ENCODE measurements at regions of chr12 and their contacts with region 1.

Region 1: DNA sequence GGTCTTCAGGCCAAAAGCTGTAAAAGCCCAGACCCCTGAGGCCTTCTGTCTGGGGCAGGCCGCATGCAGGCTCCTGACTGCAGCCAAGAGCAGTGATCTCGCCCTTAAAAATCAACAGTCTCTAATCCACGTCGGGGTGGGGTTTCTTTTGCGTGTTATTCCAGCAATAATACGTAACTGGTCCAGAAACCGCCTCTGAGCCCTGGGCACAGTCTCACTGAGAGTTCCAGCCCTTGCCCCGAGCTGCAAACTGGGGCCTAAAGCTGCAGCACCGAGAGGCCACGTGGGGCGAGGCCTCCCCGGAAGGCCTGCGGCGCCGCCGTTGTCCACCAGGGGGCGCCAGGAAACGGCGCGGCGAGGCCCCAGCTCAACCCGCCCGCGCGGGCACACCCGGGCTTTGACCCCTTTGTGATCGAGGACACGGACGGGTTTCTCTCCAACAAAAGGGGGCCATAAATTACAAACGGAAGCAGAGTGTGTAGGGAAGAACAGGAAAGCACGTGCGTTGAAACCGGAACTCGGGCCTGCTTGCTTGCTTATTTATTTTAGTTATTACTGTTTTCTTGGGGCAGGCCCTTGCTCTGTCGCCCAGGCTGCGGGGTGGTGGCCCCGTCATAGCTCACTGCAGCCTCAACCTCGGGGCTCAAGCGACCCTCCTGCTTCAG is 87.2 kb downstream of the NINJ2 start:
- DNase-seq: peak; percentile 93
- ATAC-seq: peak; percentile 75

Region 2: DNA sequence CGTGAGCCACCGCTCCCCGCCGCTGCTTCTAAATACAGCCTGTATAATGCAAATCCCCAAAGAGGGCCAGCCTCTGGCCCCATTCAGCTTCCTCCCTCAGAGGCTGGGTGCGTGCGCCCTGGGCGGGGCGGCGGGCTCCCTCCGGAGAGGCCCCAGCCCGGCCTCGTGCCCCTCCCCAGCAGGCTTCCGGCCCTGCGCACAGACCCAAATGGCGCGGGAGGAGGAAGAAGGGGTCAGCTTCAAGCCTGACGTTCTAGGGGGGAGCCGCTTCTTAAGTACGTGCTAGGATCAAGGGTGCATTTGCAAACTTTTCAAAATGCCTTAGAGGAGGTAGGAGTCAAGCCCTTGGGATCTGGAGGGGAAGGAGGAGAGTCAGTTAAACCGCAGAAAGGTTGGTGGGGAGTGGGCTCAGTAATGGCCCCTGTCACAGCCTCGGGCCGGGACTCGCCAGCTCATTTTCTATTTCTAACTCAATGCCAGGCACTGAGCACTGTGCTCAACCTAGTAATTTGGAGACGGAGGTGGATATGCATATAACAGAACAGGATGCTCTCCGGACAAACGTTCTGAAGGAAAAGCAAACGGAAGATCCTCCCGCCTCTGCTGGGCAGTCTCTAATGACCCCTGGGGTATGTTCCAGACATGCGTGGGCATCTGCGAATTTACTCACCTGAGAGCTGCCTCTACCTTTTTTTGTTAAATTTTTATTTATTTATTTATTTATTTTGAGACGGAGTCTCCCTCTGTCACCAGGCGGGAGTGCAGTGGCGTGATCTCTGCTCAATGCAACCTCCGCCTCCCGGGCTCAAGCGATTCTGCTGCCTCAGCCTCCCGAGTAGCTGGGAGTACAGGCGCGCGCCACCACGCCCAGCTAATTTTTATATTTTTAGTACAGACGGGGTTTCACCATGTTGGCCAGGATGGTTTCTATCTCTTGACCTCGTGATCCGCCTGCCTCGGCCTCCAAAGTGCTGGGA is 54.9 kb after region 1 on chr12:
- intact Hi-C with region 1: loop called (anchors 5 kb)
- DNase-seq: peak; percentile 90
- ATAC-seq: peak; percentile 75

Region 3: DNA sequence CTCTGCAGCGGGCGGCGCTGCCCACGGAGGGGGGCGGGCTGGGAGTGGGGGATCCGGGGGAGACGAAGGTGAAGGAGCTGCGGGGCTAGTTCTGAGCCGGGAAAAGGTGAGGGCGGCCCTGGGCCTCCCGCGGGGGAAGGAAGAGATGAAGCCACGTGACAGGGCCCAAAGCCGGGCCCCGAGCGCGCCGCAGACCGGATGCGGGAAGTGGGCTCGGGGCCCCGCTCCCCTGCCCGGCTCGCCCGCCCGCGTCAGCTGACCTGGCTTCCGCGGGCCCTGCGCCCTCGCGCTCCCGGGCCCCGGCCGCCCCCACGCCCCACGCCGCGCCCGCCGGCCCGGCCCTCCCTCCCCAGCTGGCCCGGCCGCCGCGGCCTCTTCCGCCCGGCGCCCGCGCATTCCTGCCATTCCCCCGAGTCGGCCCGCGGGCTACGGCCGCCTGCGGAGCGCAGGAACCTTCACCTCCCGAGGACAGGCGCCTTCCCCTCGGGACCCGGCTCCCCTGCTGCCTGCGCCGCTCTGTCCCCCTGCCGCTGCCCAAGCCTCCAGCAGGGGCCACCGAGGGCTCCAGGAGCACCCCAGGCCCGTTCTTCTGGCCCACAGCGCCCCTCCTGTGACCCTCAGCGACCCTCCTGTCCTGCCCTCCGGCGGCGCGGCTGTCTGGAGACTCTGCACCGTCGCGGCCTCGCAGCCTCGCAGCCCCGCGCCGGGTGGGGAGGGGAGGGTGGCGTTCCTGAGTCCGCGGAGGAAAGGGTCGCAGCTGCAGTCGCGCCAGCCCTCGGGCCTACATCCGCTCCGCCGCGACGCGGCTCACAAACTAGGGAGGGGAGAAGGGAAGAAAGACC is 66.8 kb after region 1 on chr12:
- intact Hi-C with region 1: loop called (anchors 5 kb)
- DNase-seq: peak; percentile 93
- ATAC-seq: peak; percentile 69

Region 4: DNA sequence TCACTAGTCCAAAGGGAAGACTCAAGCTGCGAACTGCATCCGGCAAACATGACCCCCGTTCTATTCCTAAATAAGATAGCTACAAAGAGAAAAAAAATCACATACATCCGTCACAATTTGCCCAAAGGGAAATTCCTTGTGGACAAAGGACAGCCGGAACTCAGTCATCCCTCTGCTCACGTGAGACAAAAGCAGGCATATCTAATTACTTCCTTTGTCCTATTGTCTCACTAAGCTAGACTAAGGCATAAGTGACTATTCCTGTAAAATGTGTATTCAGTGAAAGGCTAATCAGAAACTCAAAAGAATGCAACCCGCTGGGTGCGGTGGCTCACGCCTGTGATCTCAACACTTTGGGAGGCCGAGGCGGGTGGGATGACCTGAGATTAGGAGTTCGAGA is 114.4 kb after region 1 on chr12:
- intact Hi-C with region 1: no loop called
- DNase-seq: no peak
- ATAC-seq: no peak

Region 5: DNA sequence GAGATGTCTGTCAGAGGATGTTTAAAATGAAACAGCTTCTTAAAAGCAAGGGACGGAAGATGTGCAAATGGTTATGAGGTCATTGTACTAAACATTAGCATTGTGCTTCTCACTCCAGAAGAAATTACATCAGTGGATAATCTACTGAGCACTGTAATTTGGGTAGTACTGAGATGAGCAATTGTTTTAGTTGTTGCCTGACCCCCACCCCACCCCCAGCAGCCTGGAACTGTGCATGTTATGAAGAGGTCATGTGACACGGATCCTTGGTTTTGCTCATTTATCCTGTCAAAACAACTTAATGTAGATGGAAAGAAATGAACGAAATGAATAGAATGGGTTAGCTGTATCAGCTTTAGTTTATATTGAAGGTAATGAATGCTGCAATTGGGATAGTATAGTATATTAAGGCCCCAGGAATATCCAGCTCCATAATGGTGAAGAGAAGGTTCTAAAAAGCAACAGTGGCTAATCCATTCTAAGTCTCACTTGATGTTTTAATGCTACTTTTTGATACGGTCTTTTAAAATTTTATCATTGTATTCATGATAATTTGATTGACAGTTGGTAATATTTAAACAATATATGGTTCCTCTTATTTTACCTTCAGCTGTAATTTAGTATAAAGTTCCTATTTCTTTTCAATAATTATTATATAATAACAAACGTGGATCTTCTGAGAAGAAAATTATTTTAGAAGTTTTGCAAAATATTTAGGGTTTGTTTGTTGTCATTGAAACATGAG is 234.8 kb after region 1 on chr12:
- intact Hi-C with region 1: loop called (anchors 2 kb)
- DNase-seq: no peak
- ATAC-seq: no peak